ENCODE measurements at regions of chr2 and their contacts with region 1.

Region 1: GRCh38 chr2:165874445-165875039 is 79.0 kb downstream of the TTC21B start:
- DNase-seq: peak in 3 of 14 experiments; percentile 69 to 77 (median 70)
- ATAC-seq: peak; percentile 97
- H3K4me3 ChIP-seq: no peak overlapping the region
- H3K4me3 Mint-ChIP-seq: no peak overlapping the region
- H3K27ac ChIP-seq: no peak overlapping the region
- H3K27ac Mint-ChIP-seq: peak overlapping the region; percentile 74
- H3K4me1 ChIP-seq: no peaks in the 10 kb centered on the region
- H3K4me1 Mint-ChIP-seq: peaks cover 34% of the 10 kb centered on the region
- H3K27me3 ChIP-seq: no peaks in the 10 kb centered on the region
- H3K27me3 Mint-ChIP-seq: no peaks in the 10 kb centered on the region
- CTCF ChIP-seq: peak; percentile 68

Region 2: GRCh38 chr2:164992818-164993217 is 881.7 kb before region 1 on chr2:
- CTCF ChIA-PET with region 1: no interaction called
- POLR2A ChIA-PET with region 1: no interaction called
- intact Hi-C with region 1: loop called in 1 of 2 experiments (anchors 2 kb)
- DNase-seq: peak in 8 of 14 experiments; percentile 6 to 73 (median 26)
- ATAC-seq: peak; percentile 57
- H3K4me3 ChIP-seq: no peak overlapping the region
- H3K4me3 Mint-ChIP-seq: no peak overlapping the region
- H3K27ac ChIP-seq: no peak overlapping the region
- H3K27ac Mint-ChIP-seq: no peak overlapping the region
- H3K4me1 ChIP-seq: peaks cover 3% of the 10 kb centered on the region
- H3K4me1 Mint-ChIP-seq: peaks cover 7% of the 10 kb centered on the region
- H3K27me3 ChIP-seq: no peaks in the 10 kb centered on the region
- H3K27me3 Mint-ChIP-seq: no peaks in the 10 kb centered on the region
- CTCF ChIP-seq: peak; percentile 54

Region 3: DNA sequence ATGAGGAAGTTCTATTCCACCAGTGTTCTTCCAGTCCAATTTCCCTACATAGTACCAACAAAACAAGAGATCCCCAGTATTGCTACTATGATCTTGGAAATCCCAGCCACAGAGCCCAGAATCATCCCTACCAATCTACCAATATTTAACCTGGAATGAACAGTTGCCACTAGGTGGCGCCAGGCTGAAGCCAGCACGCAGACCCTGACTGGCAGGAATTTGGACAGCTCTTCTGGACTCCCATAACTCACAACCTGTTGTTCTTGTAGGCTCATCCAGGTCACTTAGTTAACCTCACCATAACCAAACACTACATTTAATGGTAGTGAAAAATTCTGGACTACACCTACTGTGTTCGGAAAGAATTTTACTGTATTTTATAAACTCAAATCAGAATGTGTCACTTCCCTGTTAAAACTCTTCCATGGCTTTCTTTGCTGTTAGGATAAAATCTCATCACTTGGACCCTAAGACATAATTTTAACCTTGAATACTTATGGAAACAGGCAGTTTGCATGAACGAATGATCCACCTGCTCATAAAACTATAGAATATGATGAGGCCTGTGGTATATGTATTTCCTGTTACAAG is 859.4 kb before region 1 on chr2:
- CTCF ChIA-PET with region 1: interaction called, 5 read pairs
- POLR2A ChIA-PET with region 1: interaction called, 5 read pairs
- intact Hi-C with region 1: loop called (anchors 1 to 10 kb)
- DNase-seq: peak; percentile 9 to 66 (median 24)
- ATAC-seq: no peak
- H3K4me3 ChIP-seq: no peak overlapping the region
- H3K4me3 Mint-ChIP-seq: no peak overlapping the region
- H3K27ac ChIP-seq: no peak overlapping the region
- H3K27ac Mint-ChIP-seq: no peak overlapping the region
- H3K4me1 ChIP-seq: no peaks in the 10 kb centered on the region
- H3K4me1 Mint-ChIP-seq: no peaks in the 10 kb centered on the region
- H3K27me3 ChIP-seq: no peaks in the 10 kb centered on the region
- H3K27me3 Mint-ChIP-seq: peaks cover 8% of the 10 kb centered on the region
- CTCF ChIP-seq: peak; percentile 75

Region 4: DNA sequence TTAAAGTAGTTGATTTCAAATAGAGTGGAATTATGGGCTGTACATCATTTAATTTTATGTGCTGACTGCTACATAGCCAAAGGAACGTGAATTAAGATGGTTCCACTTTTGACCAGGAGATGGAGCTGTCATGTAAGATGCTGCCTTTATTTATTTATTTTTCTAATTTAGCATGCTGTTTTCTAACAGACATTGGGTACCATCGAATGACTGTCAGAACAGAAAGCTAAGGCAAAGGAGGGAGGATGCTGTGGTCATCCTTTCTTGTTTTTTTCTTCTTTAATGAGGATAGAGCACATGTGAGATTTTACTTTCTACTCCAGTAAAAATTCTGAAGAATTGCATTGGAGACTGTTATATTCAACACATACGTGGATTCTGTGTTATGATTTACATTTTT is 635.3 kb before region 1 on chr2 and contains the start of gene SCN2A:
- CTCF ChIA-PET with region 1: no interaction called
- POLR2A ChIA-PET with region 1: no interaction called
- intact Hi-C with region 1: loop called in 1 of 2 experiments (anchors 5 kb)
- DNase-seq: peak in 3 of 14 experiments; percentile 7 to 34 (median 20)
- ATAC-seq: no peak
- H3K4me3 ChIP-seq: no peak within 1 kb of the TSS
- H3K4me3 Mint-ChIP-seq: no peak within 1 kb of the TSS
- H3K27ac ChIP-seq: no peak within 1 kb of the TSS
- H3K27ac Mint-ChIP-seq: no peak within 1 kb of the TSS
- H3K4me1 ChIP-seq: no peaks in the 10 kb centered on the region
- H3K4me1 Mint-ChIP-seq: no peaks in the 10 kb centered on the region
- H3K27me3 ChIP-seq: no peaks in the 10 kb centered on the region
- H3K27me3 Mint-ChIP-seq: peaks cover 8% of the 10 kb centered on the region
- CTCF ChIP-seq: peak; percentile 34
- total RNA-seq, gene SCN2A: not detected

Region 5: GRCh38 chr2:165401285-165401852 is 473.2 kb before region 1 on chr2:
- CTCF ChIA-PET with region 1: interaction called, 5 read pairs
- POLR2A ChIA-PET with region 1: no interaction called
- intact Hi-C with region 1: loop called (anchors 1 to 2 kb)
- DNase-seq: peak in 4 of 14 experiments; percentile 10 to 69 (median 56)
- ATAC-seq: no peak
- H3K4me3 ChIP-seq: no peak overlapping the region
- H3K4me3 Mint-ChIP-seq: no peak overlapping the region
- H3K27ac ChIP-seq: no peak overlapping the region
- H3K27ac Mint-ChIP-seq: no peak overlapping the region
- H3K4me1 ChIP-seq: no peaks in the 10 kb centered on the region
- H3K4me1 Mint-ChIP-seq: no peaks in the 10 kb centered on the region
- H3K27me3 ChIP-seq: peaks cover 3 to 4% of the 10 kb centered on the region in 2 experiments
- H3K27me3 Mint-ChIP-seq: peaks cover 17% of the 10 kb centered on the region
- CTCF ChIP-seq: peak; percentile 74

Region 6: DNA sequence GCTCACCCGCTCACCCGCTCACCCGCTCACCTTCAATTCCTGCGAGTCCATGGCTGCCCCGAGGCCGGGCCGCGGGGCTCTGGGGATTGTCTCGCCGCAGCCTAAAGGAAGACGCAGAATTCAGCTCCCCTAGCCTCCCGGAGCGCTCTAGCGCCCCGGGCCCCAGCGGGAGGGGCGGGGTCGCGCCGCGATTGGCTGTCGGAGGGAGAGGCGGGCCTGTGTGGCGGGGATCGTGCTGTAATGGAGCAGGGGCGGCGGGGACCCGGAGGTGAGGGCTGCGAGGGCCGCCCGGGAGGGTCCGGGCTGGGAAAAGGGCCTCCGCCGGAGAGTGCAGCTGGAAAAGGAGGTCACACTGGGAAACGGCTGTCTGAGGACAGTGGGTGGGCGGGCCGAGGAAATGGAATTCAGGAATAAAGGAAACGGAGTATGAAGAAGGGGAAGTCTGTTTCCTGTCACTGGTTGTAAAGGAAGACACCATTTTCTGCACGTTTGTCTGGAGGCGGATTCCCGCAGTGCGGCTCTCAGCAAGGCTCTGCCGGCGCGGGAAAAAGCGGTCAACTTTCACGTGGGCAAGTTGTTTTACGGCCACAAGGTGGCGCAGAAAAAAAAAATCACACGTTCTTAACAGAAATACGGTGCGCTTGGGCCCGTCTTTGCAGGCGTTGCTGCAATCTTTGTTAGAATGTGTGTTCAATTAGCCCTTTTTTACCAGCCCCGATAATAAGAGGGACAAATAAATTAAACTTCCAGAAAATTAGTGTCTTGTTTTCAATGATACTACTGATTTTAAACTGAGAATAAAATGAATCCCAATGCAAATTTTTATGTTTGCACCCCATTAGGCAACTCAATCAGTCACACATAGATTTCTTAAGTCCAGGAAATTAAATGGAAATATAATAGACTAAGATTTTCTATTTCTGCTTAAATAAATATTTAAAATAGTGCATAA is 79.4 kb after region 1 on chr2 and contains the start of gene TTC21B:
- CTCF ChIA-PET with region 1: interaction called, 4 read pairs
- POLR2A ChIA-PET with region 1: interaction called, 10 read pairs
- intact Hi-C with region 1: no loop called
- DNase-seq: peak; percentile 86 to 96 (median 93)
- ATAC-seq: peak; percentile 94
- H3K4me3 ChIP-seq: peak within 1 kb of the TSS; percentile 74
- H3K4me3 Mint-ChIP-seq: peak within 1 kb of the TSS; percentile 76
- H3K27ac ChIP-seq: peak within 1 kb of the TSS; percentile 61 to 81
- H3K27ac Mint-ChIP-seq: no peak within 1 kb of the TSS
- H3K4me1 ChIP-seq: peaks cover 25% of the 10 kb centered on the region
- H3K4me1 Mint-ChIP-seq: peaks cover 20% of the 10 kb centered on the region
- H3K27me3 ChIP-seq: no peaks in the 10 kb centered on the region
- H3K27me3 Mint-ChIP-seq: no peaks in the 10 kb centered on the region
- CTCF ChIP-seq: peak; percentile 82
- total RNA-seq, gene TTC21B: 22.9 to 25.4 TPM

Measured in CD4-positive, alpha-beta T cell (primary cell).